Activated T-helper 1 cell treated with anti-CD3 and anti-CD28 coated beads, Interleukin-12 subunit alpha, Interleukin-12 subunit beta, Interleukin-2, Interleukin-4 antibody, amounts not matched to agents 30 ng/mL and 10 ng/mL and 1 ng/mL, durations not matched to agents 14 hours and 24 hours and 36 hours (primary cell): ENCODE measurements at regions of chr5 and their contacts with region 1.

Region 1: GRCh38 chr5:143824851-143825720 is 13.1 kb downstream of the HMHB1 start:
- DNase-seq: peak; percentile 73
- H3K4me3 Mint-ChIP-seq: no peak overlapping the region
- H3K27ac Mint-ChIP-seq: no peak overlapping the region
- H3K4me1 Mint-ChIP-seq: peaks cover 14% of the 10 kb centered on the region
- H3K27me3 Mint-ChIP-seq: peaks cover 1% of the 10 kb centered on the region

Region 2: GRCh38 chr5:142795251-142795650 is 1029.8 kb before region 1 on chr5:
- intact Hi-C with region 1: no loop called
- DNase-seq: no peak
- H3K4me3 Mint-ChIP-seq: no peak overlapping the region
- H3K27ac Mint-ChIP-seq: no peak overlapping the region
- H3K4me1 Mint-ChIP-seq: peaks cover 47% of the 10 kb centered on the region
- H3K27me3 Mint-ChIP-seq: no peaks in the 10 kb centered on the region

Region 3: GRCh38 chr5:143002459-143003328 is 822.4 kb before region 1 on chr5:
- intact Hi-C with region 1: loop called (anchors 1 kb)
- DNase-seq: peak; percentile 66
- H3K4me3 Mint-ChIP-seq: peak overlapping the region; percentile 75
- H3K27ac Mint-ChIP-seq: peak overlapping the region; percentile 98
- H3K4me1 Mint-ChIP-seq: peaks cover 89% of the 10 kb centered on the region
- H3K27me3 Mint-ChIP-seq: no peaks in the 10 kb centered on the region

Region 4: DNA sequence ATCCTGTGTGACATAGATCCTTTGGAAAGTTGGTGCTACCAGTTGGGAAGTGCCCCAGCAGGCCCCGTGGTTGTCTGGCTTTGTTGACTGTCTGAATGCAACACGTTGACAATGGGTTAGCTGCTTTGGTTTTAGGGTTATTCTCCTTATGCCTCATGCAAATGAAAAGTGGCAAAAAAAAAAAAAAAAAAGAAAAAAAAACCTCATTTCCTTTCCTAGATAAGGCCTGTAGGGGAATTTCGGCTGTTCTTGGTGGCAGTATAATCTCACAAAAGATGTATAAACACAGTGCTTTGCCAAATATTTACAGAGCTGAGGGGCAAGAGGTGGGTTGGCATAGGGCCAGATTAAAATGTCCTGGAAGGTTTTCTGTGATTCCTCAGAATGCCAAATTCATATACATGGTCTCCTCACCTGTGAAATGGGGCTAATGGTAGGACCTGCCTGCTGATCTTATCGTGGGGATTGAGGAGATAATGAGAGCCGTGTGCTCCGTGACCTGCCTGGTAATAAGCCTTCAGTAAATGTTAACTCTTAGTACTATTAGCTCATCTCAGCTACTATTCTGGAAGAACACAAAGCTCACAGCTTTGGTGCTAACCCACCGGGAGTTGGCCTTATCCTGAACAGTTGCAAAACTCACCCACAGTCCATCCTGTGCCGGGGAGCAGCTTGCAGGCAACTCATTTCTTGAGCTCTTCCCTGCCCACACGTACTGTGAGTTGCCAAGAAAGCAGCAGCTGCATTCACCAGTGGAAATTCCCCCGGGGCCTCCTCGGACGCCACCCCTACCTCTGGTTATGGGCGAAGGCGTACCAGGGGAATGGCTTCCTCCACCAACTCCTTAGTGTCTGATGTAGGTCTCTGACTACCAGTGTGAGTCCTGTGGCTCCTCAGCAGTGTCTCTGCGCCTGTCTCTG is 641.9 kb before region 1 on chr5:
- intact Hi-C with region 1: loop called (anchors 1 kb)
- DNase-seq: peak; percentile 68
- H3K4me3 Mint-ChIP-seq: peak overlapping the region; percentile 29
- H3K27ac Mint-ChIP-seq: peak overlapping the region; percentile 93
- H3K4me1 Mint-ChIP-seq: peaks cover 77% of the 10 kb centered on the region
- H3K27me3 Mint-ChIP-seq: no peaks in the 10 kb centered on the region

Region 5: GRCh38 chr5:143403593-143404415 is 421.3 kb before region 1 on chr5 and contains the start of gene NR3C1:
- intact Hi-C with region 1: loop called (anchors 1 kb)
- DNase-seq: peak; percentile 82
- H3K4me3 Mint-ChIP-seq: peak within 1 kb of the TSS; percentile 95
- H3K27ac Mint-ChIP-seq: peak within 1 kb of the TSS; percentile 99
- H3K4me1 Mint-ChIP-seq: peaks cover 48% of the 10 kb centered on the region
- H3K27me3 Mint-ChIP-seq: no peaks in the 10 kb centered on the region
- total RNA-seq, gene NR3C1: 62.7 TPM in 2 replicates

Region 6: GRCh38 chr5:143693651-143694252 is 131.3 kb before region 1 on chr5:
- intact Hi-C with region 1: loop called (anchors 2 kb)
- DNase-seq: no peak
- H3K4me3 Mint-ChIP-seq: no peak overlapping the region
- H3K27ac Mint-ChIP-seq: peak overlapping the region; percentile 58
- H3K4me1 Mint-ChIP-seq: peaks cover 44% of the 10 kb centered on the region
- H3K27me3 Mint-ChIP-seq: no peaks in the 10 kb centered on the region

Region 7: DNA sequence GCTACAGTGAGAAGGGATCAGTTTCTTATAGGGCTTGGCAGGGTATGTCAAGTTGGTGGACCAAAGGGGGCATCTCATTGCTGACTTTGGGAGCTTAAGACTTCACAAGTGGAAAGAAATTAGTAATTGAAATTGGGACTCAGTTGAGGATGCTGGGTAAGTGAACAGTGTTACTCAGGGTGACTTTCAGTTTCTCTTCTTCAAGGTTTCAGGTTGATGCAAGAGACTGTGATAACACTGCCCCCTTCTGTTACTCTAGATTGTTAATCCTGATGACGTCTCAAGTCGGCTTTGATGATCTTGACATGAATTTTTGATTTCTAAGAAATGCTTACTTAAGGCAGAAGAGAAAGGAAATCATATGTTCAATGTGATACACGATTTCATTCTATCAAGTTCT is 366.9 kb after region 1 on chr5:
- intact Hi-C with region 1: loop called (anchors 1 kb)
- DNase-seq: peak; percentile 48
- H3K4me3 Mint-ChIP-seq: no peak overlapping the region
- H3K27ac Mint-ChIP-seq: no peak overlapping the region
- H3K4me1 Mint-ChIP-seq: peaks cover 21% of the 10 kb centered on the region
- H3K27me3 Mint-ChIP-seq: peaks cover 8% of the 10 kb centered on the region